ENCODE measurements at regions of chr17 and their contacts with region 1.

Region 1: DNA sequence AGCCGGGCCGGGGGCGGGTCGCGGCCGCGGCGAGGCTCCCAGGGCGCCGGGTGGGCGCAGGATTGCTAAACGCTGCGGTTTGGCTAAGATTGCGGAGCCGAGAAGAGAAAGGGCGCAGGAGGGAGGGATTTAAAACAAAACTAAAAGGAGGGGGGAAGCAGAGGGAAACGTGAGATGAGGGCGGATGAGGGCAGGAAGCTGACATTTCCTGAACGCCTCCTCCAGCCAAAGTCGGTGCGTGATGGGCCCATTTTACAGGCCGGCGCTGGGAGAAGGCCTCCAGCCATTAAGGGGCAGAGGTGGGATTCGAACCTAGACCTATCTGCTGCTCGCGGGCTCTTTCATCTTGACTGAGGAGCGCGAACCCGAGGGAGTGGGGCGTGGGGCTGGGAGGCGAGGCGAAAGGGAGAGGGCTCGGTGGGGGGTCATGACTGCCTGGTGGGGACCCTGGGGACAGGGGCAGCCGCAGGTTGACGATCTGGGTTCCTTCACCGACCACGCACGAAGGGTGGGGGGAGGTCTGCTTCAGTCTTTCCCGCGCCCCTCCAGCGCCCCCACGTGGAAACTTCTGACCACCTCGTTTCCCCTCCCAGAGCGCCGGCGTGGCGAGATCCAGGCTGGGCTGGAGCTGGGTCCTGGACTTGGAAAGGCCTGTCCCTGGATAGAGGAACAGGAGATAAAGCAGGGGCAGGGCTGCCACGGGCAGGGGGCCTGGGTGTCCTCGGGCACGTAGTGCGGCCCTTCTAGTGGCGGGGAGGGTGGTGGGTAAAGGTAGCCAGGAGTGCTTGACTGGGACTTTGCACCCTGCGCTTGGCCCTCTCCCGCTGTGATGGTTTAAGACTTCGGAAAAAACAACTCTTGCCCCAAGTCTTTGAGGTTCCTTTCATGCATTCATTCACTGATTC is 3.8 kb upstream of the TAC4 start:
- DNase-seq: peak; percentile 46 to 55 (median 52)
- H3K4me3 ChIP-seq: peak overlapping the region; percentile 45 to 95 (median 72)
- H3K4me3 Mint-ChIP-seq: peak overlapping the region; percentile 94 to 95
- H3K27ac ChIP-seq: peak overlapping the region; percentile 27 to 74
- H3K27ac Mint-ChIP-seq: peak overlapping the region; percentile 43 to 89 (median 83)
- H3K4me1 ChIP-seq: peaks cover 18 to 22% of the 10 kb centered on the region in 2 donors
- H3K4me1 Mint-ChIP-seq: peaks cover 22% of the 10 kb centered on the region
- H3K27me3 ChIP-seq: peaks cover 0 to 3% of the 10 kb centered on the region in 2 donors
- H3K27me3 Mint-ChIP-seq: peaks cover 13 to 28% (median 23%) of the 10 kb centered on the region in 3 donors
- CTCF ChIP-seq: peak; percentile 90

Region 2: DNA sequence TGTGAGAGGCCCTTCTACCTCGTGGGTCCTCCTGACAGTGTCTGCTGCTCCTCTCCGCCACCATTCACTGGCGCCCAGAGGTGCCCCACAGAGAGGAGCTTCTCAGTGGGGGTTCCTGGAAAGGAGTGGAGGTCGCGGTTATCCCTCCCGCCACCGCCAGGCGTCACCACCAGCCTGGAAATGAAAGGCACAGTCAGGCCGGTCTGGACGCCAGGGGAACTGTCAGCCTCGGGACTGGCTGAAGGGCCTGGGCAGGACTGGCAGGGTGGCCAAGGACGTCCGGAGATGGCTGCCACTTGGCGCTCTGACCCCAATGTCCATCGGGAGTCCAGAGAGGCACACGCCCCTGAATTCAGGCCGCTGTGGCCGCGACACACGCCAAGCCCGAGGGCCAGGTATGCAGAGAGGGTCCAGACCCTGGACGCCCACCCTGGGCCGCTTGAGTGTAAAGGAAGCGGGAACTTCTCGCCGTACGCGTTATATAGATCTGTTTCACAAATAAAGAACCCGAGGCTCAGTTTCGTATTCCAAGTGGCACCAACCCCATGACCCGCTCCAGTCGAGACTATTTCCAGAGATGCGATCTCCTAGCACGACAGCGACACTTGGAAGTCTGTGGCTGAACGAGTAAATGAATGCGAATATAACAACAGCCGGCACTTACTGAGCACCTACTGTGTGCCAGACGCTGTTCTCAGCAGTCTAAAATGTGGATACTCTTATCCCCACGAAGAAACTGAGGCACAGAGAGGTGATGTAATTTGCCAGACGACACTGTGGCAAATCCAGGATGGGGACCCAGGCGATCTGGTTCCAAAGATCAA is 283.6 kb before region 1 on chr17:
- intact Hi-C with region 1: loop called (anchors 2 to 10 kb)
- DNase-seq: peak; percentile 80 to 83 (median 82)
- H3K4me3 ChIP-seq: peak overlapping the region; percentile 5 to 76 (median 39)
- H3K4me3 Mint-ChIP-seq: peak overlapping the region; percentile 79 to 87
- H3K27ac ChIP-seq: no peak overlapping the region
- H3K27ac Mint-ChIP-seq: peak overlapping the region in 2 of 7 donors; percentile 37 to 60
- H3K4me1 ChIP-seq: peaks cover 14 to 18% of the 10 kb centered on the region in 2 donors
- H3K4me1 Mint-ChIP-seq: peaks cover 17% of the 10 kb centered on the region
- H3K27me3 ChIP-seq: peaks cover 3 to 34% of the 10 kb centered on the region in 2 donors
- H3K27me3 Mint-ChIP-seq: peaks cover 39 to 53% (median 48%) of the 10 kb centered on the region in 3 donors
- CTCF ChIP-seq: peak; percentile 97

Region 3: GRCh38 chr17:49575579-49576087 is 276.0 kb before region 1 on chr17 and contains the start of gene NXPH3:
- intact Hi-C with region 1: loop called in 1 of 2 experiments (anchors 10 kb)
- DNase-seq: peak; percentile 28 to 53 (median 33)
- H3K4me3 ChIP-seq: peak within 1 kb of the TSS in 1 of 3 experiments; percentile 68
- H3K4me3 Mint-ChIP-seq: peak within 1 kb of the TSS; percentile 63 to 89
- H3K27ac ChIP-seq: no peak within 1 kb of the TSS
- H3K27ac Mint-ChIP-seq: no peak within 1 kb of the TSS
- H3K4me1 ChIP-seq: peaks cover 10 to 19% of the 10 kb centered on the region in 2 donors
- H3K4me1 Mint-ChIP-seq: peaks cover 11% of the 10 kb centered on the region
- H3K27me3 ChIP-seq: peaks cover 16 to 72% of the 10 kb centered on the region in 2 donors
- H3K27me3 Mint-ChIP-seq: peaks cover 64 to 83% (median 70%) of the 10 kb centered on the region in 3 donors
- CTCF ChIP-seq: peak; percentile 60
- polyA plus RNA-seq, gene NXPH3: not detected

Region 4: DNA sequence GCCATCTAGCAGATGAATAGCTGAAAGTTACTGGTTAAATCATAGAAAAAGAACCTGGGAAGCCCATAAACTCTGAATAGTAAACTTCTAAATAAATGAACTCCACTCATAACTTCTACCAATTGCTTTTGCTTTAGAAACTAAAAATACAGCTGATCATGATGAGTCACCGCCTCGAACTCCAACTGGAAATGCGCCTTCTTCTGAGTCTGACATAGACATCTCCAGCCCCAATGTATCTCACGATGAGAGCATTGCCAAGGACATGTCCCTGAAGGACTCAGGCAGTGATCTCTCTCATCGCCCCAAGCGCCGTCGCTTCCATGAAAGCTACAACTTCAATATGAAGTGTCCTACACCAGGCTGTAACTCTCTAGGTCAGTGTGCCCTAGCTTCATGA is 53.5 kb before region 1 on chr17:
- intact Hi-C with region 1: no loop called
- DNase-seq: no peak
- H3K4me3 ChIP-seq: no peak overlapping the region
- H3K4me3 Mint-ChIP-seq: no peak overlapping the region
- H3K27ac ChIP-seq: no peak overlapping the region
- H3K27ac Mint-ChIP-seq: peak overlapping the region in 2 of 7 donors; percentile 42 to 78
- H3K4me1 ChIP-seq: no peaks in the 10 kb centered on the region
- H3K4me1 Mint-ChIP-seq: peaks cover 3% of the 10 kb centered on the region
- H3K27me3 ChIP-seq: no peaks in the 10 kb centered on the region
- H3K27me3 Mint-ChIP-seq: no peaks in the 10 kb centered on the region
- CTCF ChIP-seq: no peak